Calu3 (cell line): ENCODE measurements at regions of chr5 and their contacts with region 1.

Region 1: DNA sequence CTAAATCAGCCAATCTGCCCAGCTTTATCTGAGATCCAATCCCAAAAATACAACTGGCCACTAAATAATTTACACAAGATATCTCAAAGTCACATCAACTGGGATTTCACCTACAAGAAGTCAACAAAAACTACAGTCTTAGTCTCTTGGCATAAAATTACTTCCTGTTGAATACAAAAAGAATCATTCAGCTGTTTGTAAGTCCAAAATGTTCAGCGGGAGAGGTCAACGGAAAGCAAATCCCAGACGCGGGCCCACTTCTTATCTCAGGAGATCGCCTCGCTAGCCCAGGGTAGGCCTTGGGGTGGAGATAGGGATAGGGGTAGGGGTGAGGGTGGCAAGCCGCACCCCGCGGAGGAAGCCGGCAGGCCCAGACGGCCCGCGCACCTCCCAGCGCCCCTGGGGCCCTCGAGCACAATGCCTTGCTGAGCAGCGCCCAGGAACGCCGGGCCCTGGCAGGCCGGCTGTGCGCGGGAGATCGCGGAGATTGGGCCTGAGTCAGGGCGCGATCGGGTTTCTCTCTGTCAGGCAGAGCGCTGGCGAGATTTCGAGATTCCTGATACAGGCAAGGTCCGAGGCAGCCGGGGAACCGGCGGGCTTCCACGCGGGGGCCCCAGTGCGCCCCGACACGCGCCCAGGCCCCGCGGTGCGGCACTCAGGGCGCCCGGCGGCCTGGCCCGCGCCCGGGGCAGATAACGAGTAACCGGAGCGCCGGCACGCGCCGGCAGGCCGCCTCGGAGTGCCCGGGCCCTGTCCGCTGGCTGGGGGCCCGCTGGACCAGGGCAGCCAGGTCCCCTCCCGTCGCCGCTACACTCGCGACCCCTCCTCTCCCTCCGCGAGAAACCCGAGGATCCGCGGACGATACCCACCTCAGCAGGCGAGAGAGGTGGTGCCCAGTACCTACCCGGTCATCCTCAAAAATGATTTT is 601 bp downstream of the HINT1 start:
- DNase-seq: peak; percentile 79
- H3K4me3 Mint-ChIP-seq: peak overlapping the region; percentile 75
- H3K27ac Mint-ChIP-seq: peak overlapping the region; percentile 78
- H3K4me1 Mint-ChIP-seq: peaks cover 27% of the 10 kb centered on the region
- H3K27me3 Mint-ChIP-seq: no peaks in the 10 kb centered on the region
- CTCF ChIP-seq: no peak

Region 2: DNA sequence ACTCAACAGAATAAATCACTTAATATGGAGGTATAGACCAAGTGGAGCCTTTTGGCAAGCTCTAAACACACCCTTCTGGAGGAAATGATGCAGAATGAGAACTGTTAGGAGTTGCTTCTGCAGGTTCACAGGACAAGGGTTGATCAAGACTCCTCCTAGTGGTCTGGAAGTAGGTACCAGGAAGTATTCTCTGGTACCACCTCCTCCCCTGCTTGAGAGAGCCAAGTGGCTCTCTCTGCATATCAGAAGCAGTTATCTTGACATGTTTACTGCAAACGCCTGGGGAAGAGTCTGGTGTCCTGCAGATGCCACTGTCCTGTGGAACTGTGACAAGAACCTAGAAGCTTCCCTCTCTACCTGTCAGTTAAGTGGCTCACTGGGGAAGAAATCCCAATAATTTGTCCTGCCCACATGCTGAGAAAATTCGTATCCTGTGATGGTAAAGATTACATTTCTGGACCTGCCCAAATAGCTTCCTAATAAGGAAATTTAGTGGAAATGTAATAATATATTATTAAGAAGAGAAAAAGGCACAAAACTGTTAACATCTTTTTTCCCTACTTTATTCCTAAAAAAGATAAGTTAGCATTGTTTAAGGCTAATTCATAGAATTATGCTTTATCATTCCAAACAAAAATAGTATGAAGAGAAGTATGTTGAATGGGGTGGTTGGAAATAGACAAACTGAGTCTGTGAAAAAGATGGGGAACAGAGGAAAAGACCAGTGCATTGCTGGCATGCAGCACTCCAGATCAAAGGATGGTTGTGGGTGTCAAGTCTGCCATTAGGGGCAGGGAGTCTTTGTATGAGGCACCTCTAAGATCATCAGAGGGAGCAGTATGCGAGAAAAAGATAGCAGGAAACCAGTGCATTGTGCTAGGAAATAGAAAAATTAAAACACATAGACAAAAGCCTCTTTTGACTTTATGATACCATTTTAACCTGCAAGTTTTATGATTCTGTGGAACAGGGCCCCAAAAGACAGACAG is 218.2 kb after region 1 on chr5:
- CTCF ChIA-PET with region 1: interaction called, 9 read pairs
- intact Hi-C with region 1: loop called (anchors 5 kb)
- DNase-seq: peak; percentile 63
- H3K4me3 Mint-ChIP-seq: no peak overlapping the region
- H3K27ac Mint-ChIP-seq: no peak overlapping the region
- H3K4me1 Mint-ChIP-seq: peaks cover 33% of the 10 kb centered on the region
- H3K27me3 Mint-ChIP-seq: no peaks in the 10 kb centered on the region
- CTCF ChIP-seq: peak; percentile 80

Region 3: GRCh38 chr5:131417240-131417869 is 252.9 kb after region 1 on chr5:
- CTCF ChIA-PET with region 1: no interaction called
- intact Hi-C with region 1: loop called (anchors 1 kb)
- DNase-seq: peak; percentile 86
- H3K4me3 Mint-ChIP-seq: no peak overlapping the region
- H3K27ac Mint-ChIP-seq: peak overlapping the region; percentile 42
- H3K4me1 Mint-ChIP-seq: no peaks in the 10 kb centered on the region
- H3K27me3 Mint-ChIP-seq: no peaks in the 10 kb centered on the region
- CTCF ChIP-seq: peak; percentile 80